HepG2 (cell line): ENCODE measurements at regions of chr20 and their contacts with region 1.

Region 1: GRCh38 chr20:19964289-19965263 is 52.6 kb upstream of the NAA20 start:
- DNase-seq: peak; percentile 99
- ATAC-seq: peak; percentile 97
- H3K4me3 ChIP-seq: peak overlapping the region in 1 of 3 experiments; percentile 15; a peak in 1 of 6 replicates
- H3K27ac ChIP-seq: peak overlapping the region; percentile 72
- H3K4me1 ChIP-seq: peaks cover 74% of the 10 kb centered on the region
- H3K27me3 ChIP-seq: no peaks in the 10 kb centered on the region
- CTCF ChIP-seq: peak; percentile 34; the same call in 1 of the 2 replicates
- EP300 ChIP-seq: peak; percentile 96 to 99
- POLR2A ChIP-seq: peak in 1 of 2 experiments; percentile 43; a peak in 1 of 4 replicates
- RAD21 ChIP-seq: peak; percentile 27; the same call in 1 of the 2 replicates

Region 2: DNA sequence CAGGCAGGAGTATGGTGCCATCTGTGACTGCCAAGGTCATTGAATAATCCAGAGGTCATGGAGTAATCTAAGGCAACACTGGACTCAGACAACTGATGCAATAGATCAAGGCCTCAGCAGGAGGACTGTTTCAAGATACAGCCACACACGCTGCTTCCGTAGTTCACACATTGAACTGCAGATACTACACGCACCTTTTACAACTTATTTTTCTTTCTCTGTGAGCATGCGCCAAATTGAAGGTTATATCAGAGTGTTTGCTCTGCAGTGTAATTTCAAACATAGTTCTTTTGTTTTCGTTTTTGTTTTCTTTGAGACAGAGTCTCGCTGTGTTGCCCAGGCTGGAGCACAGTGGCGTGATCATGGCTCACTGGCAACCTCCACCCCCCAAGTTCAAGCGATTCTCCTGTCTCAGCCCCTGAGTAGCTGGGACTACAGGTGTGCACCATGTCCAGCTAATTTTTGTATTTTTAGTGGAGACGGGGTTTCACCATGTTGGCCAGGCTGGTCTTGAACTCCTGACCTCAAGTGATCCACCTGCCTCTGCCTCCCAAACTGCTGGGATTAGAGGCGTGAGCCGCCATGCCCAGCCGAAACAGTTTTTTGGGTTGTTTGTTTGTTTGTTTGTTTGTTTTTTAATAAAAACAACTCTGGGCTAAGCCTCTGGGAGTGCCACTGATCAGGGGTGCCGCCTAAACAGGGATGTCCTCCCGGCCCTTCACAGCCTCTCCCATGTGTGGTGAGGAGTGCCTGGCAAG is 44.0 kb before region 1 on chr20:
- CTCF ChIA-PET with region 1: no interaction called
- POLR2A ChIA-PET with region 1: interaction called, 3 read pairs
- in situ Hi-C with region 1: no loop called
- intact Hi-C with region 1: loop called (anchors 1 kb)
- DNase-seq: peak; percentile 87
- ATAC-seq: peak; percentile 59
- H3K4me3 ChIP-seq: no peak overlapping the region
- H3K27ac ChIP-seq: peak overlapping the region; percentile 23
- H3K4me1 ChIP-seq: peaks cover 45% of the 10 kb centered on the region
- H3K27me3 ChIP-seq: no peaks in the 10 kb centered on the region; a peak in 1 of 5 replicates
- CTCF ChIP-seq: peak; percentile 11; the same call in 1 of the 2 replicates
- EP300 ChIP-seq: peak; percentile 75 to 89; a peak in 3 of 4 replicates
- POLR2A ChIP-seq: no peak
- RAD21 ChIP-seq: no peak

Region 3: DNA sequence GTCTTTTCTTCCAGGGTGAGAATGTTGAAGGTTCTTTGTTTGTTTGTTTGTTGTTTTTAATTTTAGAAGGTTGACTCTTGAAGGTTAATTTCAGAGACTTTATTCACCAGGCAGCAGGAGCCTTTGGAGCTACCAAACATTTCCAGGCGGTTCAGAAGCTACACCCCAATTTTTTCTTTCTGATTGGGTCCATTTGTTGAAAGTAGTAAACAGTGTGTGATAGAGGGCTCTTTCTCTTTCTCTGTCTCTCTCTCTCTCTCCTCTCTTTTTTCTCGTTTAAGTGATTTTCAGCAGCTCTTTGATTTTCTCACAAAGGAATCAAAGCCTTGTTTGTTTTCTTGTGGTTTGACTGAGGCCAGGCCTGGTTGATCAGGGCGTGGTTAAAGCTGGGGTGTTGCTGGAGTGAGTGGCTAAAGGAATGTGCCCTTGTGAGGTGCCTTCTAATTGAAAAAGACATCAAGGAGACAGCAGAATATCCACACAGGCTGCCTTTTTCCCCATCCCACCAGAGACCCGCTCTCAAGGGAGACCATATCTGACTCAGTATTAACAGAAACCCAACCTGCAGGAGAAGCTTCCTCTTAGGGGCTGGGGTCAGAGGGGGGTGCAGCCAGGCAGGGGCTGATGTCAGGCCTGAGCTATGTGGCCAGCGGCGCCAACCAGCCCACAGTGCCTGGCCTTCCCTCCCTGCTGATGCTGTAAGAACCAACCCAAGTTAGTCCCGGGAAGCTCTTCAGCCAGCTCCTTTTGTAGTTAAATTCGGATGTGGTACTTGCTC is 12.2 kb after region 1 on chr20:
- CTCF ChIA-PET with region 1: no interaction called
- POLR2A ChIA-PET with region 1: interaction called, 22 read pairs
- in situ Hi-C with region 1: no loop called
- intact Hi-C with region 1: no loop called
- DNase-seq: peak; percentile 90
- ATAC-seq: peak; percentile 82
- H3K4me3 ChIP-seq: no peak overlapping the region
- H3K27ac ChIP-seq: peak overlapping the region; percentile 1
- H3K4me1 ChIP-seq: peaks cover 34% of the 10 kb centered on the region
- H3K27me3 ChIP-seq: no peaks in the 10 kb centered on the region
- CTCF ChIP-seq: no peak
- EP300 ChIP-seq: peak in 1 of 2 experiments; percentile 50; a peak in 2 of 4 replicates
- POLR2A ChIP-seq: no peak
- RAD21 ChIP-seq: no peak